ENCODE measurements at regions of chr16 and their contacts with region 1.

Region 1: DNA sequence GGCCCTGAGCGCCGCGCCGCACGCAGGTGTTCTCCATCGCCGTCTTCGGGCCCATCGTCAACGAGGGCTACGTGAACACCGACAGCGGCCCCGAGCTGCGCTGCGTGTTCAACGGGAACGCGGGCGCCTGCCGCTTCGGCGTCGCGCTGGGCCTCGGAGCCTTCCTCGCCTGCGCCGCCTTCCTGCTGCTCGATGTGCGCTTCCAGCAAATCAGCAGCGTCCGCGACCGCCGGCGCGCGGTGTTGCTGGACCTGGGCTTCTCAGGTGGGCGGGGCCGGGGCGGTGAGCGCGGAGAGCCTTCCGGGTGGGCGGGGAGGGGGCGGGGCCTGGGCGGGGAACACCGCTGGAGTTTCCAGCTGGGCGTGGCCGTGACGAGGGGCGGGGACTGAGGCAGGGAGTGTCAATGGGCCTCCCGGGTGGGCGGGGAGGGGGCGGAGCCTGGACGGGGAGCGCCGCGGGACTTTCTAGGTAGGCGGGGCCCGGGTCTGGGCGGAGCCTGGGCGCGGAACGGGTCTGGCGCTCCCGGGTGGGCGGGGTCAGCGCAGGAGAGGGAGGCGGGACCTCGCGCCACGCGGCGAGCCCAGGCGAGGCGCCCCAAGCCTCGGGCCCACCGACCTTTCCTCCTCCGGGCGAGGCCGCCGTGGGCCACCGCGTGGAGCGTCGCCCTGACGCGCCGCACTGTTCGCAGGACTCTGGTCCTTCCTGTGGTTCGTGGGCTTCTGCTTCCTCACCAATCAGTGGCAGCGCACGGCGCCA is 2.4 kb downstream of the SYNGR3 start:
- DNase-seq: peak; percentile 92 to 99 (median 93)
- H3K4me3 ChIP-seq: peak overlapping the region in 1 of 2 donors; percentile 42
- H3K4me3 Mint-ChIP-seq: peak overlapping the region in 7 of 8 donors; percentile 40 to 84 (median 73)
- H3K27ac ChIP-seq: peak overlapping the region; percentile 61
- H3K27ac Mint-ChIP-seq: peak overlapping the region in 6 of 7 donors; percentile 62 to 88 (median 78)
- H3K4me1 ChIP-seq: peaks cover 22% of the 10 kb centered on the region
- H3K4me1 Mint-ChIP-seq: peaks cover 6 to 30% (median 16%) of the 10 kb centered on the region in 4 donors
- H3K27me3 ChIP-seq: no peaks in the 10 kb centered on the region
- H3K27me3 Mint-ChIP-seq: peaks cover 6 to 7% of the 10 kb centered on the region in 2 donors

Region 2: DNA sequence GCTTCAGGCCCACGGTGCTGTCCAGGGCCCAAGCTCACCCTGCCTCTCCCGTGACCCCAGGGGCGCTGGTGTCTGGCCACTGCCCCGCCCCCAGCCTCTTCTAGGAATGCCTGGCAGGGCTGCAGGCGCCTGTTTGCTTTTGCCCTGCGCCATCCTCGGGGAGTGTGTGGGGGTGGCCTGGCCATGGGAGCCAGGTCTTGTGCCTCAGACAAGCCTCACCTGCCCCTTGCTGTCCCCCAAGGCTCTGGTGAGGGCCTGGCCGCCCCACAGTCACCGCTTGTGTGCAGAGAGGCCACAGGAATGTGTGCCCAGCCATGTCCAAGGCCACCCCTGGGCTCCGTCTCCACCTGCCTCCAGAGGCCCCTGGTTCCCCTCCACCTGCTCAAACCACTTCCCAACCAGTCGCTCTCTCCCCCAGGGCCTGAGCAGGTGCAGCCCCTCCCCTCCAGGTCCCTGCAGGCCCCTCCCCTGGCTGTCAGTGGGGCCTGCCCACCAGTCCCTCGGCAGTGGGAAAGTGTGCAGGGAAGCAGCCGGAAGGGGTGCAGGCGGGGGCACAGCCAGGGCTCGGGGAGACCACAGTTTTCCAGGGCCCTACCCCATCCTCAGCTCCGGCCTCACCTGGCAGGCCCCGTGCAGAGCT is 197.8 kb before region 1 on chr16:
- CTCF ChIA-PET with region 1: no interaction called
- POLR2A ChIA-PET with region 1: no interaction called
- intact Hi-C with region 1: no loop called
- DNase-seq: no peak
- H3K4me3 ChIP-seq: no peak overlapping the region
- H3K4me3 Mint-ChIP-seq: no peak overlapping the region
- H3K27ac ChIP-seq: no peak overlapping the region
- H3K27ac Mint-ChIP-seq: no peak overlapping the region
- H3K4me1 ChIP-seq: no peaks in the 10 kb centered on the region
- H3K4me1 Mint-ChIP-seq: no peaks in the 10 kb centered on the region
- H3K27me3 ChIP-seq: no peaks in the 10 kb centered on the region
- H3K27me3 Mint-ChIP-seq: no peaks in the 10 kb centered on the region

Region 3: GRCh38 chr16:1942810-1943726 is 49.1 kb before region 1 on chr16 and contains the start of gene MSRB1:
- CTCF ChIA-PET with region 1: no interaction called
- POLR2A ChIA-PET with region 1: interaction called, 7 read pairs
- intact Hi-C with region 1: loop called (anchors 5 kb)
- DNase-seq: peak; percentile 97 to 99 (median 98)
- H3K4me3 ChIP-seq: peak within 1 kb of the TSS; percentile 52 to 90
- H3K4me3 Mint-ChIP-seq: peak within 1 kb of the TSS; percentile 82 to 91 (median 86)
- H3K27ac ChIP-seq: peak within 1 kb of the TSS; percentile 58
- H3K27ac Mint-ChIP-seq: peak within 1 kb of the TSS; percentile 64 to 91 (median 70)
- H3K4me1 ChIP-seq: peaks cover 21% of the 10 kb centered on the region
- H3K4me1 Mint-ChIP-seq: peaks cover 0 to 26% (median 7%) of the 10 kb centered on the region in 4 donors
- H3K27me3 ChIP-seq: no peaks in the 10 kb centered on the region
- H3K27me3 Mint-ChIP-seq: no peaks in the 10 kb centered on the region
- total RNA-seq, gene MSRB1: 9.3 to 10.6 TPM

Region 4: DNA sequence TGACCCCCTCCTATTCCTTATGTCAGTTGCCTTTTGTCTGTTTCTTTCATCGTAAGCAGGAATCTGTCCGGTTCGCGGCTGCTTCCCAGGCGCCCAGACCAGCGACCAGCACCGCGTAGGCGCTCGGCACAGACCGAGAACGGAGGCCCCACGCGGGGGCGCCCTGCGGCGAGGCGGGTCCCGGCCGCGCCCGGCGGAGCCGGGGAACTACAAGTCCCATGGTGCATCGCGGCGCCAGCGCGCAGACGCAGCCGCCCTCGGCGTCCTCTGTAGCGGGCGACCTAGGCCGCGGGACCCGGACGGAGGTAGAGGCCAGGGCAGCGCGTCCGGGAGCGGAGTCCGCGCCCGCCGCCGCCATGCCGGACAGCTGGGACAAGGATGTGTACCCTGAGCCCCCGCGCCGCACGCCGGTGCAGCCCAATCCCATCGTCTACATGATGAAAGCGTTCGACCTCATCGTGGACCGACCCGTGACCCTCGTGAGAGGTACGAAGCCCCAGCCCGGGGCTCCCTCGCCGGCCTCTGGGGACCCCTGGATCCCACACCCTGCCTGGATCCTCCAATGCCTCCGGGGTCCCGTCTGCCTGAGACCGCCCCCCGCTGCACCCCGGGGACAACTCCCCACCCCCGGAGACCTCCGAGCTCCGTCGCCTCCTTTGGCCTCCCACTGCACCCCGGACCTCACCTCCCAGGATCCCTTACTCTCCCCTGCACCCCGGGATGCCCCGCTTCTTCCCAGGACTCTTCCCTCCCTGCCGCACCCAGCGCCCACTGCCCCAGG is 32.7 kb before region 1 on chr16 and contains the start of gene NDUFB10:
- CTCF ChIA-PET with region 1: interaction called, 6 read pairs
- POLR2A ChIA-PET with region 1: interaction called, 99 read pairs
- intact Hi-C with region 1: loop called (anchors 1 kb)
- DNase-seq: peak; percentile 84 to 90 (median 87)
- H3K4me3 ChIP-seq: peak within 1 kb of the TSS; percentile 69 to 89
- H3K4me3 Mint-ChIP-seq: peak within 1 kb of the TSS; percentile 88 to 94 (median 92)
- H3K27ac ChIP-seq: peak within 1 kb of the TSS; percentile 78
- H3K27ac Mint-ChIP-seq: peak within 1 kb of the TSS; percentile 86 to 99 (median 95)
- H3K4me1 ChIP-seq: peaks cover 47% of the 10 kb centered on the region
- H3K4me1 Mint-ChIP-seq: peaks cover 26 to 53% (median 40%) of the 10 kb centered on the region in 4 donors
- H3K27me3 ChIP-seq: no peaks in the 10 kb centered on the region
- H3K27me3 Mint-ChIP-seq: no peaks in the 10 kb centered on the region
- total RNA-seq, gene NDUFB10: 76.5 to 86.2 TPM

Region 5: DNA sequence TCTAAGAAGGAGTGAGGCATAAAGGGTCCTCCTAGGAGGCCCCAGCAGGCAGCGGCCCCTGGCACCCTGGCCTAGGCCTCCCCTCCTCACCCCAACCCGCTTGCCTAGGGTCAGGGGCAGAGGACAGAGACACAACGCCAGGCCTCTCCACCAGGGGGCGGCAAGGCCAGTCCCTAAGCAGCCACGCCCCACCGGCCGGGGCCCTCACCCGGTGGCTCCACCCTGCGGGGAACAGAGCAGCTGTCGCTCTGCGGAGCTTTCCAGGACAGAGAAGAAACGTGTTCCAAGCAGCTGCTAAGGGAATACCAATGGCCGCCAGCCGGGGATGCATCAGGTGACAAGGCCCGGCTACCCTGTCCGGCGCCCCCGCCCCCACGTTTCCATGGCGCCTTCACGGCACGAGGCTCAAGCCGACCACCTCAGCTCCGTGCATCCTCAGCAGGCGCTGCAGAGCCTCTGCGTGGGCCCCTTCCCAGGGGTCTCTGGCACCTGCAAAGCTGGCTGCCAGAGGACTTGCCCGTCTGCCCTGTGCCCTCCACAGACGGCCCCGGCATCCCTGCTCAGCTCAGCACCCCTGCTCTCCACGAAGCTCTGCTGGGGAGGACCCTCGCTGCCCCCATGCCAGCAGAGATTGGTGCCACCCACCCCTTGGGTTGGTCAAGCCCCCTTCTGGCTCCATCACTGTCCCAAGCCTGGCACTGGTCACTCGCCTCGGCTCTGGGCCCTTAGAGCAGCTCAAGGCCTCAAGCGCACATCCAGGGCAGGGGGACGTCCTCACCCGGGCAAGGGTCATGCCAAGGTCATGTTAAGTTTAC is 11.9 kb after region 1 on chr16:
- CTCF ChIA-PET with region 1: interaction called, 18 read pairs
- POLR2A ChIA-PET with region 1: interaction called, 29 read pairs
- intact Hi-C with region 1: loop called (anchors 1 kb)
- DNase-seq: peak; percentile 82 to 87 (median 83)
- H3K4me3 ChIP-seq: no peak overlapping the region
- H3K4me3 Mint-ChIP-seq: peak overlapping the region in 1 of 8 donors; percentile 17
- H3K27ac ChIP-seq: no peak overlapping the region
- H3K27ac Mint-ChIP-seq: no peak overlapping the region
- H3K4me1 ChIP-seq: peaks cover 40% of the 10 kb centered on the region
- H3K4me1 Mint-ChIP-seq: peaks cover 18 to 47% (median 27%) of the 10 kb centered on the region in 4 donors
- H3K27me3 ChIP-seq: no peaks in the 10 kb centered on the region
- H3K27me3 Mint-ChIP-seq: no peaks in the 10 kb centered on the region

Region 6: DNA sequence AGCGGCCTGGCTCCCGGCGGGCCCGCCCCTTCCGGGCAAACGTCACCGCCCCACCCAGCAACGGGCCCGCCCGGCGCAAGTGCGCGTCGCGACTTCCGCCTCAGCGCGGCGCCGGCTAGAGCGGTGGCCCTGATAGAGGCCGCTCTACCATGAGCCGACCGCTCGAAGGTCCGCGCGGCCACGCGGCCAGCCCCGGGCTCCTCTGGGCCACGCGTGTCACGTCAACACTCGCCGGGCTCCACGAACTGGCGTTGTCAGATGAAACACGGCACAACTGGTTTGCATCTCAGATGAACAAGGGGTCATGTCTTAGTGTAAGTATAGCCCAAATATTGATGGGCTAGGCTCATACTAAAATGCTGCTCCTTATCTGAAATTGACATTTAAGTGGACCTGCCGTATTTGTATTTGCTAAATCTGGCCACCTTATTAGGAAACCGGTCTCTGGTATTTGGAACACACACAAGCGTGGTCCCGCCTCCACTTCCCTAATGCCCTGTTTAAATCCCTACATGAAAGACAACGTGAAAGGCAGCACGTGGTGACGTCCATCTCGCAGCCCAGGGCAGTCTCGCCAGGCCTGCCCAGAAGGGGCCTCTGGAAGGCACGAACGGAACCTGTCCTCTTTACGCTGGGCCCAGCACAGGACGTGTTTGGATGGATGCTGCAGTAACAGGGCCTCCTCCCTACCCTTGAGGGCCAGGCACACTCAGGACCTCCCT is 17.8 kb after region 1 on chr16 and contains the start of gene ZNF598:
- CTCF ChIA-PET with region 1: interaction called, 18 read pairs
- POLR2A ChIA-PET with region 1: interaction called, 29 read pairs
- intact Hi-C with region 1: loop called (anchors 1 kb)
- DNase-seq: peak; percentile 76 to 82 (median 80)
- H3K4me3 ChIP-seq: peak within 1 kb of the TSS; percentile 62 to 91
- H3K4me3 Mint-ChIP-seq: peak within 1 kb of the TSS; percentile 88 to 95 (median 92)
- H3K27ac ChIP-seq: peak within 1 kb of the TSS; percentile 93
- H3K27ac Mint-ChIP-seq: peak within 1 kb of the TSS; percentile 92 to 98 (median 98)
- H3K4me1 ChIP-seq: peaks cover 39% of the 10 kb centered on the region
- H3K4me1 Mint-ChIP-seq: peaks cover 23 to 44% (median 33%) of the 10 kb centered on the region in 4 donors
- H3K27me3 ChIP-seq: no peaks in the 10 kb centered on the region
- H3K27me3 Mint-ChIP-seq: no peaks in the 10 kb centered on the region
- total RNA-seq, gene ZNF598: 48.5 to 49.8 TPM

Region 7: GRCh38 chr16:2082160-2082982 is 90.2 kb after region 1 on chr16:
- CTCF ChIA-PET with region 1: no interaction called
- POLR2A ChIA-PET with region 1: no interaction called
- intact Hi-C with region 1: no loop called
- DNase-seq: no peak
- H3K4me3 ChIP-seq: no peak overlapping the region
- H3K4me3 Mint-ChIP-seq: peak overlapping the region in 1 of 8 donors; percentile 39
- H3K27ac ChIP-seq: no peak overlapping the region
- H3K27ac Mint-ChIP-seq: no peak overlapping the region
- H3K4me1 ChIP-seq: no peaks in the 10 kb centered on the region
- H3K4me1 Mint-ChIP-seq: no peaks in the 10 kb centered on the region
- H3K27me3 ChIP-seq: no peaks in the 10 kb centered on the region
- H3K27me3 Mint-ChIP-seq: no peaks in the 10 kb centered on the region

Region 8: GRCh38 chr16:2095315-2095853 is 103.3 kb after region 1 on chr16:
- CTCF ChIA-PET with region 1: no interaction called
- POLR2A ChIA-PET with region 1: no interaction called
- intact Hi-C with region 1: no loop called
- DNase-seq: no peak
- H3K4me3 ChIP-seq: no peak overlapping the region
- H3K4me3 Mint-ChIP-seq: no peak overlapping the region
- H3K27ac ChIP-seq: no peak overlapping the region
- H3K27ac Mint-ChIP-seq: no peak overlapping the region
- H3K4me1 ChIP-seq: no peaks in the 10 kb centered on the region
- H3K4me1 Mint-ChIP-seq: no peaks in the 10 kb centered on the region
- H3K27me3 ChIP-seq: no peaks in the 10 kb centered on the region
- H3K27me3 Mint-ChIP-seq: no peaks in the 10 kb centered on the region

Measured in CD4-positive, alpha-beta memory T cell (primary cell).